ENCODE measurements at regions of chr17 and their contacts with region 1.

Region 1: GRCh38 chr17:82029990-82030469 is 1.4 kb upstream of the RAC3 start:
- DNase-seq: no peak
- ATAC-seq: peak in 1 of 2 donors; percentile 1
- H3K4me3 ChIP-seq: peak overlapping the region; percentile 62
- H3K27ac ChIP-seq: no peak overlapping the region
- H3K4me1 ChIP-seq: peaks cover 18% of the 10 kb centered on the region
- H3K27me3 ChIP-seq: peaks cover 8% of the 10 kb centered on the region
- CTCF ChIP-seq: no peak

Region 2: GRCh38 chr17:82160075-82160474 is 130.0 kb after region 1 on chr17:
- intact Hi-C with region 1: loop called (anchors 5 kb)
- DNase-seq: no peak
- ATAC-seq: no peak
- H3K4me3 ChIP-seq: no peak overlapping the region
- H3K27ac ChIP-seq: no peak overlapping the region
- H3K4me1 ChIP-seq: no peaks in the 10 kb centered on the region
- H3K27me3 ChIP-seq: no peaks in the 10 kb centered on the region
- CTCF ChIP-seq: no peak

Region 3: GRCh38 chr17:82173351-82174041 is 143.5 kb after region 1 on chr17:
- intact Hi-C with region 1: no loop called
- DNase-seq: no peak
- ATAC-seq: no peak
- H3K4me3 ChIP-seq: no peak overlapping the region
- H3K27ac ChIP-seq: no peak overlapping the region
- H3K4me1 ChIP-seq: no peaks in the 10 kb centered on the region
- H3K27me3 ChIP-seq: no peaks in the 10 kb centered on the region
- CTCF ChIP-seq: no peak